ENCODE measurements at regions of chr11 and their contacts with region 1.

Region 1: DNA sequence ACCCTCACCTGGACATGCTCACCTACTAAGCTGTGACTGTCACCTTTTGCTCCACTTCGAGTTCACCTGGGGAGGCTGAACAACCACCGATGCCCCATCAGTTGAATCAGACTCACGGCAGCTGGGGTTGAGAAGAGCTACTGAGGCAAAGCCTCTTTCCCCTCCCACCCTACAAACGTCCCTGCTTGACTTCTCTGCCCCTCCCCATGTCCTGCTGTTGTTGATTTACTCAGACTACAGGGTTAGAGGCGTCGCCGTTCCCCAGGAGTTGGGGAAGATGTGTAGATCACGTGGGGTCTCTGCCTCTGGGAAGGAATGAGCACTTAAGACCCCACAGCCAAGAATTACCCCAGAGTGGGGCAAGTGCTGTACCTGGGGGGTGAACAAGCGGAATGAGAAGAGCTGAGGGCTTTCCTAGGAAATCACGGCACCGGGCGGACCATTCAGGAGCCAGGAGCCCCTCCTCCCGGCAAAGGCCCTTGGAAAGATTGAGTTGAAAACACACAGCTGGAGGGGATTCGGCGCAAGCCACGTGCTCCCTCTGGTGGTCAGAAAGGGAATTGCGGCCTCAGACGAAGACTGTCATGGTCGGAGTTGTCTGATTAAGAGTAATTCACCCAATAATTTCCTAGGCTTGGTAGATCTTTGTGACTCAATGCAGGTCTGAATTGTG is 7.0 kb downstream of the FXYD2 start:
- DNase-seq: peak; percentile 81
- ATAC-seq: peak; percentile 17
- H3K4me3 Mint-ChIP-seq: peak overlapping the region; percentile 88
- H3K27ac Mint-ChIP-seq: peak overlapping the region; percentile 97
- H3K4me1 Mint-ChIP-seq: peaks cover 75% of the 10 kb centered on the region
- H3K27me3 Mint-ChIP-seq: peaks cover 3% of the 10 kb centered on the region
- CTCF ChIP-seq: peak; percentile 80

Region 2: GRCh38 chr11:117327567-117328374 is 489.7 kb before region 1 on chr11 and contains the start of gene CEP164:
- CTCF ChIA-PET with region 1: no interaction called
- POLR2A ChIA-PET with region 1: interaction called, 6 read pairs
- intact Hi-C with region 1: loop called (anchors 5 kb)
- DNase-seq: peak; percentile 89
- ATAC-seq: peak; percentile 92
- H3K4me3 Mint-ChIP-seq: peak within 1 kb of the TSS; percentile 59
- H3K27ac Mint-ChIP-seq: no peak within 1 kb of the TSS
- H3K4me1 Mint-ChIP-seq: peaks cover 2% of the 10 kb centered on the region
- H3K27me3 Mint-ChIP-seq: no peaks in the 10 kb centered on the region
- CTCF ChIP-seq: no peak
- total RNA-seq, gene CEP164: 42.9 and 50.9 TPM in 2 replicates

Region 3: GRCh38 chr11:117720061-117720511 is 97.4 kb before region 1 on chr11:
- CTCF ChIA-PET with region 1: no interaction called
- POLR2A ChIA-PET with region 1: no interaction called
- intact Hi-C with region 1: no loop called
- DNase-seq: no peak
- ATAC-seq: no peak
- H3K4me3 Mint-ChIP-seq: no peak overlapping the region
- H3K27ac Mint-ChIP-seq: no peak overlapping the region
- H3K4me1 Mint-ChIP-seq: no peaks in the 10 kb centered on the region
- H3K27me3 Mint-ChIP-seq: peaks cover 17% of the 10 kb centered on the region
- CTCF ChIP-seq: no peak

Region 4: GRCh38 chr11:117843666-117844484 is 26.4 kb after region 1 on chr11:
- CTCF ChIA-PET with region 1: interaction called, 11 read pairs
- POLR2A ChIA-PET with region 1: interaction called, 3 read pairs
- intact Hi-C with region 1: loop called (anchors 2 kb)
- DNase-seq: peak; percentile 79
- ATAC-seq: peak; percentile 98
- H3K4me3 Mint-ChIP-seq: no peak overlapping the region
- H3K27ac Mint-ChIP-seq: no peak overlapping the region
- H3K4me1 Mint-ChIP-seq: no peaks in the 10 kb centered on the region
- H3K27me3 Mint-ChIP-seq: peaks cover 1% of the 10 kb centered on the region
- CTCF ChIP-seq: peak; percentile 40

Region 5: DNA sequence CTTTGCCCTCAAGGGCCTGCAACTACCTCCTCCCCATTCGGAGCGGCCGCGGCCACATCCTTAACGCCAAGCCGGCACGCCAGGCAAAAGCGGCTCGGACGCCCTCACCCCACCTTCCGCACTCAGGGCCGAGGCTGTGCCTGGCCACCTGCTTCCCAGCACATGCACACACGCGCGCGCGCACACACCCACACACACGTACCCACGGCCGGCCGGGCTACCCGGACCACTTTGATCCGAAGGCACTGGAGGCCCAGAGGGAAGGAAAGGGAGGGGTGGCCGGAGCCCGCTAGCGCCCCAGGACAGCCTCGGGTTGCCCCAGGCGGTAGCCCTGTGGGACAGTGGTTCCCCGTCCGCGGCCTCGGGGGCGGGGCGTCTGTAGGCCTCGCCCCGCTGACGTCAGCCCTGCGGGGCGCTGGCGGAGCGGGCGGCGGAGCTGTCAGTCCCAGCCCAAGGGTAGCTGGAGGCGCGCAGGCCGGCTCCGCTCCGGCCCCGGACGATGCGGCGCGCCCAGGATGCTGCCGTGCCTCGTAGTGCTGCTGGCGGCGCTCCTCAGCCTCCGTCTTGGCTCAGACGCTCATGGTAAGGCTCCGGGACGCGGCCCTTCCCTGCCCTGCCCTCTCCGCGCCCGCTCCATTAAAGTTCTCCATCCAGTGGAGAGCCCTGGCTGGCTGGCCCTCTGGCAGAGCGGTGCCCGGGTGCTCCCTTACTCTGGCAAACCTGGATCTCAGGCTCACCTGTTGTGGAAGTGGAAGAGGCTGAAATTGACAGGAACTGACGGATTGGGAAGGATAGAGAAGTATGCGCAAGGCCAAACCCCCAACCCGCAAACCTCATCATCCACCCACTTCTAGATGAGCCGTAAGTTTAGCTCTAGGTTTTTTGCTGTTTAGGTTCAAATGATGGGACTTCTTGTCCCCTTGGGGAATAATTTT is 168.7 kb after region 1 on chr11 and contains the start of gene IL10RA:
- CTCF ChIA-PET with region 1: interaction called, 6 read pairs
- POLR2A ChIA-PET with region 1: interaction called, 73 read pairs
- intact Hi-C with region 1: loop called (anchors 1 kb)
- DNase-seq: peak; percentile 93
- ATAC-seq: peak; percentile 89
- H3K4me3 Mint-ChIP-seq: peak within 1 kb of the TSS; percentile 90
- H3K27ac Mint-ChIP-seq: peak within 1 kb of the TSS; percentile 96
- H3K4me1 Mint-ChIP-seq: peaks cover 89% of the 10 kb centered on the region
- H3K27me3 Mint-ChIP-seq: no peaks in the 10 kb centered on the region
- CTCF ChIP-seq: no peak
- total RNA-seq, gene IL10RA: 303 and 350 TPM in 2 replicates

Region 6: DNA sequence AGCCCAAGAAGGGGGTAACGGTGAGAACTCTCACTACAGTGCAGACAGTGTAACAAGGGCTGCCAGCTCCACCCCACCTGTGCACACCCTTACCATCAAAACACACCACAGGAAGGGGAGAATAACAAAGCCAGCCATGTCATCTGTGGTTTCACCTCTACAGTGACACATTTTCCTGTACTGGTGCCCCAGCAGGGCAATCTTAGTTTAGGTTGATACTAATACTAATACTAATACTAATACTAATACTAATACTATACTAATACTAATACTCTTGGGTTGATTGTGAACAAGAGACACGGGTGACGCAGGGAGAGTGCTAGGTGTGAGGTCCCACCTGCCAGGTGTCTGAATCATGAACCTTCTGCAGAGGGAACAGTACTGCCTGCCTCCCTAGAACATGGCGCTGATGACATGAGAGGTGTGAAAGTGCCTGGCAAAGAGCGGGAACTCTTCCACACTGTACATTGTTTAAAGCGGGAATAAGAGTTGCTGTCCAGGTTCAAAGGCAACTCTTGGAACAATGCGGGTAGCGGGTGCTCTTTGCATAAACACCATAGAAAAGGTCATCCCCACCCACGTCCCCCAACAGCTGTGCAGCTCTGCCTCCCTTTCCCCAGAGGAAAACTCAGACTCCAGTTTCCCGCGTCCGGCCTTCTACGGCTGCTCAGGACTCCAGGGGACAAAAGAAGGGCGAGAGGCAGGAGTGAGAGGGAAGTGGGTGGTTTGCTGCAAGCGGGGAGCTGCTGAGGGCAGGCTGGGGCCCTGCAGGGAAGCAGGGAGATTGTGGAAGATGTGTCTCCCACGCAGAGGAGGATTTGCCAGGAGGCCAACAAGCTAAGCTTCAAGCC is 234.3 kb after region 1 on chr11:
- CTCF ChIA-PET with region 1: interaction called, 52 read pairs
- POLR2A ChIA-PET with region 1: interaction called, 56 read pairs
- intact Hi-C with region 1: no loop called
- DNase-seq: no peak
- ATAC-seq: peak; percentile 77
- H3K4me3 Mint-ChIP-seq: peak overlapping the region; percentile 5
- H3K27ac Mint-ChIP-seq: peak overlapping the region; percentile 70
- H3K4me1 Mint-ChIP-seq: peaks cover 44% of the 10 kb centered on the region
- H3K27me3 Mint-ChIP-seq: no peaks in the 10 kb centered on the region
- CTCF ChIP-seq: no peak

Region 7: DNA sequence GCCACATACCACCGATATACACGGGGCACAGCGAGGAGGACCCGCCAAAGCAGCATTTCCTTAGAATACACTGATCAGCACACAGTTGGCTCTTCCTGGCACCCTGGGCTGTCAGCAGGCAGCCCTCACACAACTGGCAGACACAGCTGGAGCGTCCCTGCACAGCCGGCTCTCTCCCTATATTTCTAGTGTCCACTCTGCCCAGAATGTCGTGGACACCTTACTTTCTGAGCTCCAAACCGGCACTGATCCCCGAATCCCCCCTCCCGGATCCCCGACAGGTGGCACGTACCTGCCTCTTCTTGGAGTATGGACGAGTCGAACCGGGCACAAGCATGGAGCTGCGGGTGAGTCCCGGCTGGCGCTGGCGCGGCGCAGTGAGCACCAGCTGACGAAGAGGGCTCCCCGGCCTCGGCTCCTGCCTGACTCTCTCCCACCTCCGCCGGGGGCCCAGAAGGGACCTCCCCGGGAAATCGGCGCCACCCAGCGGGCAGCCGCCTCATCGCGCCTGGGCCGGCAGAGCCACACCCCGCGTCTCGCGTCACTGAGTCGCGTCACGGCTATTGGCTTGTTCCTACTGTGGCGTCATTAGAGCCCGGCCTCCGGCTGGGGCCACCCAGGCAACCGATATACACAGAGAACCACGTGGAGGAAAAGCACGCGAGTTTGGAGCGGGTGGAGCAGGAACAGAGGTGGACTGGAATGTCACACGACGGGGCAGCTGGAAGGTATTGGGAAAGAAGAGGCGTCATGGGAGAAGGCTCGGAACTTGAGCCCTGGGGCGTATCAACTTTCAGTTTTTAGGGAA is 1563.9 kb after region 1 on chr11 and contains the start of gene USP2:
- CTCF ChIA-PET with region 1: no interaction called
- POLR2A ChIA-PET with region 1: no interaction called
- intact Hi-C with region 1: loop called (anchors 1 kb)
- DNase-seq: peak; percentile 96
- ATAC-seq: peak; percentile 99
- H3K4me3 Mint-ChIP-seq: no peak within 1 kb of the TSS
- H3K27ac Mint-ChIP-seq: peak within 1 kb of the TSS; percentile 21
- H3K4me1 Mint-ChIP-seq: no peaks in the 10 kb centered on the region
- H3K27me3 Mint-ChIP-seq: peaks cover 3% of the 10 kb centered on the region
- CTCF ChIP-seq: peak; percentile 46
- total RNA-seq, gene USP2: 0.24 TPM in 1 of 2 replicates, not detected in the other